Activated CD4-positive, alpha-beta T cell treated with anti-CD3 and anti-CD28 coated beads for 36 hours (primary cell): ENCODE measurements at regions of chr12 and their contacts with region 1.

Region 1: GRCh38 chr12:106841510-106842302 is 67.2 kb downstream of the RIC8B start:
- DNase-seq: peak; percentile 44
- ATAC-seq: peak; percentile 53
- H3K4me3 Mint-ChIP-seq: no peak overlapping the region
- H3K27ac Mint-ChIP-seq: no peak overlapping the region
- H3K4me1 Mint-ChIP-seq: peaks cover 13% of the 10 kb centered on the region
- H3K27me3 Mint-ChIP-seq: no peaks in the 10 kb centered on the region

Region 2: GRCh38 chr12:106386813-106387535 is 454.7 kb before region 1 on chr12:
- CTCF ChIA-PET with region 1: interaction called, 16 read pairs
- POLR2A ChIA-PET with region 1: no interaction called
- intact Hi-C with region 1: loop called (anchors 1 to 5 kb)
- DNase-seq: no peak
- ATAC-seq: no peak
- H3K4me3 Mint-ChIP-seq: no peak overlapping the region
- H3K27ac Mint-ChIP-seq: no peak overlapping the region
- H3K4me1 Mint-ChIP-seq: no peaks in the 10 kb centered on the region
- H3K27me3 Mint-ChIP-seq: no peaks in the 10 kb centered on the region

Region 3: DNA sequence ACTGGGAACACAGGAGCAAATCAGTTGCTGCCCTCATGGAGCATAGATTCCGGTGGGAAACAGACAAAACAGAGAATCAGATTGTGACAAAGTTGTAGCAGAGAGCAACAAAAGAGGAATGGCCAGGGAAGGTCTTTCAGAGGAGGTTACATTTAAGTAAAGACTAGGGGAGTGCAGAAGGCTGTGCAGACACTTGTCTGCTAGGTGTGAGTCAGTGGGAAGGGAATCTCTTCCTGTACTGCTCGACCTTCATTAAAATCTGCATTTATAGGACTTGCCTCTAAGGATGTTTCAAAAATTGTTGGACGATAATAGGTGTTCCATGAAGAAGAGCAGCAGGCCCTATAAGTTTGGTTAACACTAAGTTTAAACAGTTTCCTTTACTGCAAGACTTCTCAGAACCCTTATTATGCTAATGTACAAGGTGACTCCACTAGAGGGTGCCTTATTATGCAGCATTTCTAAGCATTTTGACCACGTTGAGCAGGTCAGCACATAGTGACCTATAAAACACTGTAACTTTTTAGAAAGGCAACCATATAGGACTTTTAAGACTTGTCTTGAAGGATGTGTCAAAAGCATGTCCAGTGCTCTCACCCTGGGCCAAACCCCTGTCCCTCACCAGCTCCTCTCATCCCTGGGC is 159.0 kb before region 1 on chr12:
- CTCF ChIA-PET with region 1: no interaction called
- POLR2A ChIA-PET with region 1: no interaction called
- intact Hi-C with region 1: loop called in 1 of 2 experiments (anchors 5 kb)
- DNase-seq: no peak
- ATAC-seq: no peak
- H3K4me3 Mint-ChIP-seq: no peak overlapping the region
- H3K27ac Mint-ChIP-seq: no peak overlapping the region
- H3K4me1 Mint-ChIP-seq: no peaks in the 10 kb centered on the region
- H3K27me3 Mint-ChIP-seq: no peaks in the 10 kb centered on the region